Activated CD8-positive, alpha-beta memory T cell treated with anti-CD3 and anti-CD28 coated beads, Interleukin-2, amount 10 ng/mL, durations not matched to agents 7 days and 5 days (primary cell): ENCODE measurements at regions of chr16 and their contacts with region 1.

Region 1: DNA sequence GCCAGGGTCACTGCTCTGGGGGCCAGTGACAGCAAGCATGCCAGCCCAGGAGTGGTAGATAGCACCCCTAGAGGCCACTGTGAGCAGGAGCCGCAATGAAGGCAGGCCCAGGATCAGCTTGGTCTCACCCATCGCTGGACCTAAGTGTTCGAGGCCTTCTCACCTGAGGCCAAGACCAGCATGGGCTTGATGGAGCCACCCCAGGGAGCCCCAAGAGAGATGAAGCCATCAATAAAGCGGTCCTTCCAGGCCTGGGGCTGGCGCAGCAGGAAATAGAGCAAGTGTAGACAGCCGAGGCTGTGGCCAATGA is 1.8 kb downstream of the LCAT start:
- DNase-seq: peak; percentile 59
- ATAC-seq: peak; percentile 60
- H3K4me3 Mint-ChIP-seq: no peak overlapping the region
- H3K27ac Mint-ChIP-seq: no peak overlapping the region
- H3K4me1 Mint-ChIP-seq: peaks cover 30% of the 10 kb centered on the region
- H3K27me3 Mint-ChIP-seq: no peaks in the 10 kb centered on the region

Region 2: DNA sequence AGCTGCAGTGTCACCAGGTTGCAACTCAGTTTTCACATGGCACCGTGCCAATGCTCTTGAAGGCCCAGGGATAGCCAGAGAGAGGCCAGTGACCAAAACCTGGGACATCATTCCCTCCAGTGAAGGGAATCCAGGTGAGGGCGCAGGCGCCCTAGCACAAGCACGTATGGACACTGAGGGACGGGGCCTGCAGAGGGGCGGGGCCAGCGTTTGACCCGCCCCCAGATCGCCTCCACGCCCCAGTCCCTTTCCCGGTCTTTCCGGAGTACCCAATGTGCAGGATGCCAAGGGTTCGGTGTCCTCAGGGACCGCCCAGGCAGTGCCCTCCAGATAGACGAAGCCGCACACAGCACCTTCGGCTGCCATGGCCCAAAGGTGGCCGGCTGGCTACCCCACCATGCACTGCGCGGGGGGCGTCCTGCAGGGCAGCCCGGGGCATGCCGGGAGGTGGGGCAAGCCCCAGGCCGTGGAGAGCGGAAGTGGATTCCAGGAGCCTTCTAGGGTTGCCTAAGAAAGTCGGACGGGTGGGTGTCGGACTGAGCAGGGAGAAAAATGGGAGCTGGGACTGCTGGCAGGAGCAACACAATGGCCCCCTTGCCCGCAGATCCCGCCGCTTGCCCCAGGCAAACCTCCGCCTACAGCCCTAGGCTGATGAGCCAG is 21.6 kb after region 1 on chr16:
- CTCF ChIA-PET with region 1: interaction called, 14 read pairs
- DNase-seq: no peak
- ATAC-seq: no peak
- H3K4me3 Mint-ChIP-seq: no peak overlapping the region
- H3K27ac Mint-ChIP-seq: no peak overlapping the region
- H3K4me1 Mint-ChIP-seq: peaks cover 12% of the 10 kb centered on the region
- H3K27me3 Mint-ChIP-seq: no peaks in the 10 kb centered on the region